Caco-2 (cell line): ENCODE measurements at regions of chr10 and their contacts with region 1.

Region 1: DNA sequence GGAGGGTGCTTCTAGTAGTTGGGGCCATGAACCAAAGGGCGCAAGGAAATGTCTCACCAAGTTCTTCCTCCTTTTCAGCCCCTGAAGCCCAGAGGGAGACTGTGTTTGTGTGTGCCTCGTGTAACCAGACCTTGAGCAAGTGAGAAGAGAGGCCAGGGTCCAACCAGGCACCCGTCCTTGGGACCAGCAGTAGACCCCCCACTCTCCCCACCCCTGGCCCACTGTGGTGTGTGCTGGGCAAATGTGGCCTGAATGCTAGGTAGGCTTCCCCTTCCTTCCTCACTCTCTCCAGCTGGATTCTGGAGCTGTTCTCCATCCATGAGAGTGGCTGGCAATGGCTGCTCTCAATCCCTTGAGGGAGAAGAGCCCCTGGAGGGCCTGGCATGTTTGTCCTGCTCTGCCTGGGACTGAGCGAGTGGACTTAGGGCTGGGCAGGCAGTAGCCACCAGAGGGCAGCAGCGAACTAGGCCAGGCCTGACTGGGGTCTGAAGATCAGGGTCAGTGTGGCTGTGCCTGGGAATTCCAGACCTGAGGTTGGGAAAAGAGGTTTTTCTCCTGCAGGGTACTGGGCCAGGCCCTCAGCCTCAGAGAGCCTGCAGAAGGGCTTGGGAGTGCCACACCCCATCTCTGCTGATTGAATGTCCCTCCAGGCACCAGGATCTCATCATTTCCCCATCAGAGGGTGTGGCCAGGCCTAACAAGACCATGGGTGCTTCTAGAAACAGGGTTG is 12.5 kb downstream of the SFRP5 start:
- DNase-seq: peak; percentile 81 to 86
- H3K4me3 ChIP-seq: no peak overlapping the region
- H3K4me3 Mint-ChIP-seq: no peak overlapping the region
- H3K27ac Mint-ChIP-seq: peak overlapping the region; percentile 53
- H3K4me1 ChIP-seq: peaks cover 5% of the 10 kb centered on the region; the same call in 1 of the 2 replicates
- H3K4me1 Mint-ChIP-seq: peaks cover 4% of the 10 kb centered on the region
- H3K27me3 ChIP-seq: no peaks in the 10 kb centered on the region
- H3K27me3 Mint-ChIP-seq: no peaks in the 10 kb centered on the region
- CTCF ChIP-seq: peak; percentile 89 to 99

Region 2: GRCh38 chr10:97648562-97649404 is 110.5 kb before region 1 on chr10:
- CTCF ChIA-PET with region 1: no interaction called
- POLR2A ChIA-PET with region 1: no interaction called
- intact Hi-C with region 1: no loop called
- DNase-seq: peak in 1 of 2 experiments; percentile 30
- H3K4me3 ChIP-seq: no peak overlapping the region
- H3K4me3 Mint-ChIP-seq: peak overlapping the region; percentile 2
- H3K27ac Mint-ChIP-seq: peak overlapping the region; percentile 72
- H3K4me1 ChIP-seq: peaks cover 13% of the 10 kb centered on the region
- H3K4me1 Mint-ChIP-seq: peaks cover 13% of the 10 kb centered on the region
- H3K27me3 ChIP-seq: no peaks in the 10 kb centered on the region
- H3K27me3 Mint-ChIP-seq: no peaks in the 10 kb centered on the region
- CTCF ChIP-seq: no peak

Region 3: DNA sequence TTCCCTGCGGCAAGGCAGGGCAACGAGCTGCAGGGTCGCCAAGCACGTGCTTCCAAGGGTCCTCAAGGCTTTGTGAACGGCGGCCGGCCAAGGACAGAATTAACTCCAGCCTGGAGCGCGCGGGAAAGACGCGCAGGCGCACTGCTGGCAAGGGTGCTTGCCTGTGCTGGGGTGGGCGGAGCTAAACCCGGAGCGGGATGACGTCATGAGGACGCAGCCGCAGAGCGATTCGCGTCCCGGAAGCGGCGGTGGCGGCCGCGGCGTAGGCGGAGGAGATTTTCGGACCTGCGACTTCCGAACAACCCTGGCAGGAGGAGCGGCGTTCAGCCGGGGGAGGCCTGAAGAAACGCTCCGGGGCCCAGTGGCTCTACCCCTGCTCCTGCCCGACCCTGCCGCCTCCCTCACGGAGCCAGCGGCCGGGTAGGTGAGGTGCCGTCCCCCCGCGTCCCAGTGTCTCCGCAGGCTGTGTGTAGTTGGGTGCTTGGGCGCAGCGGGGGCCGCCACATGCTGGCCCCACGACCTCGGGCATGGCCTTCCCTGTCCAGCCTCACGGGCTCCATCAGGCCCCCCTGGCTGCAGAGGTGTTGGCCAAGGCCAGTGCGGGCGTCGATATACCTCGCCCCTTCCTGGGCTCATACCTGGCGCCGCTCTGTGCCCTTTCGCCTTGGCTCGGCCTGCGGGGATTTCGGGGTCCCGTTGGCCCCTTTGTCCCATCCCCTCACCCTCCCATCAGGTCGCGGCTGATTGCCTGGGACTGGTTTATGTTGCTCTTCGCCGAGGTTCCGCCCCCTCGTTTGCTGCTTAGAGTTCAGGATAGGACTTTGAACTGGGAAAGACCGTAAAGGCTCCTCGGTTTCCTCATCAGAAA is 22.2 kb before region 1 on chr10 and contains the start of gene ZFYVE27:
- CTCF ChIA-PET with region 1: interaction called, 3 read pairs
- POLR2A ChIA-PET with region 1: interaction called, 10 read pairs
- intact Hi-C with region 1: no loop called
- DNase-seq: peak; percentile 97 to 98
- H3K4me3 ChIP-seq: peak within 1 kb of the TSS; percentile 77
- H3K4me3 Mint-ChIP-seq: peak within 1 kb of the TSS; percentile 83
- H3K27ac Mint-ChIP-seq: peak within 1 kb of the TSS; percentile 84
- H3K4me1 ChIP-seq: peaks cover 4% of the 10 kb centered on the region; the same call in 1 of the 2 replicates
- H3K4me1 Mint-ChIP-seq: peaks cover 21% of the 10 kb centered on the region
- H3K27me3 ChIP-seq: no peaks in the 10 kb centered on the region
- H3K27me3 Mint-ChIP-seq: no peaks in the 10 kb centered on the region
- CTCF ChIP-seq: no peak
- total RNA-seq, gene ZFYVE27: 41.3 and 41.6 TPM in 2 replicates

Region 4: DNA sequence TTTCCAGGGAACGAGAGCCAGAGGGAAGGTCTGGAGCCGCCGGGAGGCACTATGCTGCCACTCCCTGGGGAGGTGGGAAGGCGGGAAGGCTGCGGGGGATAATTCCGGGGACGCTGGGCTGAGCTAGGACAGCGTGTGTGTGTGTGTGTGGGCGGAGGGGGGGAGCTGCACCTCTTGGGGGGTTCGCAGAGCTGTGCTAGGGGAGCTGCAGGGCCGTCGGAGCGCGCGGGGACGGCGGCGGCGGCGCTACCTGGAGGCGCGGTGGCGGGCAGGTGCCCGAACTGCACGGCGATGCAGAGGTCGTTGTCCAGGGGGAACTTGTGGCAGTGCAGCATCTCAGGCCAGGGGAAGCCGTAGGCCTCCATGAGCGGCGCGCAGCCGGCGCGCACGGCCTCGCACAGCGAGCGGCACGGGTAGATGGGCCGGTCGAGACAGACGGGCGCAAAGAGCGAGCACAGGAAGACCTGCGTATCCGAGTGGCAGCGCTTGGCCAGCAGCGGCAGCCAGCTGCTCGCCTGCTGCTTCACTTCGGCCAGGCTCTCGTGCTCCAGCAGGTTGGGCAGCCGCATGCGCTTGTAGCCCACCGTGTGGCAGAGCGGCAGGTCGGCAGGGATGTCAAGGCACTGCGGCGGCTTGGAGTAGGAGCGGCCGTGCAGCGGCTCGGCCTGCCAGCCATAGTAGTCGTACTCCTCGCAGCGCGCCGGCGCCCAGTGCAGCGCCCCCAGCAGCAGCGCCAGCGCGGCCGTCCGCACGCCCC is 11.9 kb after region 1 on chr10:
- CTCF ChIA-PET with region 1: no interaction called
- POLR2A ChIA-PET with region 1: interaction called, 3 read pairs
- intact Hi-C with region 1: loop called (anchors 1 kb)
- DNase-seq: peak in 1 of 2 experiments; percentile 50
- H3K4me3 ChIP-seq: peak overlapping the region; percentile 43
- H3K4me3 Mint-ChIP-seq: peak overlapping the region; percentile 75
- H3K27ac Mint-ChIP-seq: no peak overlapping the region
- H3K4me1 ChIP-seq: peaks cover 17% of the 10 kb centered on the region; the same call in 1 of the 2 replicates
- H3K4me1 Mint-ChIP-seq: peaks cover 7% of the 10 kb centered on the region
- H3K27me3 ChIP-seq: peaks cover 2% of the 10 kb centered on the region; the same call in 1 of the 2 replicates
- H3K27me3 Mint-ChIP-seq: peaks cover 12% of the 10 kb centered on the region
- CTCF ChIP-seq: no peak

Region 5: DNA sequence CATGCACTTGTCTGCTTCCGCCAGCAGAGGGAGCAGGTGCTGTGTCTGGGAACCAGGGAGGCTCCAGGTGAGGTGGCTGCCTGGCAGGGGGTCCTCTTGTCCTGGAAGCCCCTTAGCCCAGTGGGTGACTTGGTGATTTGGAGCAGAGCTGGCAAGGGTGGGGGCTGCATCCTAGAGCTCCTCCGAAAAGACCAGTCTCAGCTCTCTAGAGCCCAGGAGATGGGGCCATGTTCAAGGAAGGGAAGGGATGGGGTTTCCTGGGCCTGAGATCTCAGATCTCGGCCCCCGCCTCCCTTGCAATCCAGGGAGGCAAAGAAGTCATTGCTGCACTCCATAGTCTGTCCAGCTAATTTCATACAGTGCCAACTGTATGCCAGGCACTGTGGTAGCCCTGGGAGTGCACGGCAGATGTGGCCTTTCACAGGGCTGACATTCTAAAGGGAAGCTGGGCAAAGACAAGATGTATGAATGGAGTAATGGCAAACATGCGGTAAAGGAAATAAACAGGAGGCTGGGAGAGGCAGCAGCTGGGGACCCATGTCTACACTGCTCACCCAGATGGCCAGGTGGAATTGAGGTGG is 32.9 kb after region 1 on chr10:
- CTCF ChIA-PET with region 1: interaction called, 6 read pairs
- POLR2A ChIA-PET with region 1: no interaction called
- intact Hi-C with region 1: loop called (anchors 2 kb)
- DNase-seq: peak; percentile 70 to 85
- H3K4me3 ChIP-seq: no peak overlapping the region
- H3K4me3 Mint-ChIP-seq: no peak overlapping the region
- H3K27ac Mint-ChIP-seq: no peak overlapping the region
- H3K4me1 ChIP-seq: peaks cover 40% of the 10 kb centered on the region
- H3K4me1 Mint-ChIP-seq: peaks cover 6% of the 10 kb centered on the region
- H3K27me3 ChIP-seq: no peaks in the 10 kb centered on the region
- H3K27me3 Mint-ChIP-seq: no peaks in the 10 kb centered on the region
- CTCF ChIP-seq: peak; percentile 95 to 96

Region 6: GRCh38 chr10:97869091-97870042 is 110.0 kb after region 1 on chr10:
- CTCF ChIA-PET with region 1: no interaction called
- POLR2A ChIA-PET with region 1: no interaction called
- intact Hi-C with region 1: loop called (anchors 1 kb)
- DNase-seq: peak; percentile 87 to 90
- H3K4me3 ChIP-seq: no peak overlapping the region
- H3K4me3 Mint-ChIP-seq: no peak overlapping the region
- H3K27ac Mint-ChIP-seq: no peak overlapping the region
- H3K4me1 ChIP-seq: peaks cover 12% of the 10 kb centered on the region
- H3K4me1 Mint-ChIP-seq: no peaks in the 10 kb centered on the region
- H3K27me3 ChIP-seq: no peaks in the 10 kb centered on the region
- H3K27me3 Mint-ChIP-seq: peaks cover 10% of the 10 kb centered on the region
- CTCF ChIP-seq: peak; percentile 77 to 90